ENCODE measurements at regions of chr19 and their contacts with region 1.

Region 1: DNA sequence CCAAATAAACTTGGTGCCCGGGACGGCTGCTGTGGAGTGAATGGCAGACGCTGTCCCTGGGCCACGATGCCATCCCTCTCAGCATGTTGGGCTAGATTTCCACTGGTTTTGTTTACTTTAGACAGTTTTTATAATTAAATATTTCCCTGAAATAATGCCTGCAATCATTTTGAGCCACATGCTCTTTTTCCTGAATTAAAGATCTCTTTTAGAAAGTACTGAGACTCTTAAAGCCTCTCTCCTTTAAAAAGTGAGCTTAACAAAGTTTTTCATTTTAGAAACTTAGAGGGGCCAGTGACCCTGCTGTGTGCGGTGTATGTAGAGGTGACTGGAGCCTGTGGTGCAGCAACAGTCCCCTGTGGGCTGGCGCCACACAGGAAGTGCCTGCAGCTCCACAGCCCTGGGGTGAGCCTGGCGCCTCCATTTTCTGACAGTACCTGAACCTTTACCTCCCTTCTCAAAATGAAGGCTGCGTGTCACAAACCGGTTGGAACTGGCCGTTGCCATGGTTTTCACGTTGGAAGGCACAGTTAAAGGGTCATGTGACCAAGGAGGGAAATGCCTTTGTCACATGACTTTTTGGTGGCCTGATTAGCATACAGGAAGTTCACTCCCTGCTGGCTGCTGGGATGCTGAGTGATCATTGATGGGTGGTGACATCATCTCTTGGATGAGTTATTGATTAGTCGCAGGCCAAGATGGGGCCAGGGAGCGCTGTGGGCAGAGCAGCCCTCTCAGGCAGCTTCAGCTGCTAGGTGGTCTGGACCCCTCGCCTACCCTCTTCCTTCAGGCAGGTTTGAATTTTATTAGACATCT is 26.3 kb downstream of the TSSK6 start:
- DNase-seq: peak; percentile 95
- ATAC-seq: peak; percentile 93
- H3K4me3 Mint-ChIP-seq: peak overlapping the region; percentile 43
- H3K27ac Mint-ChIP-seq: peak overlapping the region; percentile 97
- H3K4me1 Mint-ChIP-seq: peaks cover 57% of the 10 kb centered on the region
- H3K27me3 Mint-ChIP-seq: no peaks in the 10 kb centered on the region

Region 2: DNA sequence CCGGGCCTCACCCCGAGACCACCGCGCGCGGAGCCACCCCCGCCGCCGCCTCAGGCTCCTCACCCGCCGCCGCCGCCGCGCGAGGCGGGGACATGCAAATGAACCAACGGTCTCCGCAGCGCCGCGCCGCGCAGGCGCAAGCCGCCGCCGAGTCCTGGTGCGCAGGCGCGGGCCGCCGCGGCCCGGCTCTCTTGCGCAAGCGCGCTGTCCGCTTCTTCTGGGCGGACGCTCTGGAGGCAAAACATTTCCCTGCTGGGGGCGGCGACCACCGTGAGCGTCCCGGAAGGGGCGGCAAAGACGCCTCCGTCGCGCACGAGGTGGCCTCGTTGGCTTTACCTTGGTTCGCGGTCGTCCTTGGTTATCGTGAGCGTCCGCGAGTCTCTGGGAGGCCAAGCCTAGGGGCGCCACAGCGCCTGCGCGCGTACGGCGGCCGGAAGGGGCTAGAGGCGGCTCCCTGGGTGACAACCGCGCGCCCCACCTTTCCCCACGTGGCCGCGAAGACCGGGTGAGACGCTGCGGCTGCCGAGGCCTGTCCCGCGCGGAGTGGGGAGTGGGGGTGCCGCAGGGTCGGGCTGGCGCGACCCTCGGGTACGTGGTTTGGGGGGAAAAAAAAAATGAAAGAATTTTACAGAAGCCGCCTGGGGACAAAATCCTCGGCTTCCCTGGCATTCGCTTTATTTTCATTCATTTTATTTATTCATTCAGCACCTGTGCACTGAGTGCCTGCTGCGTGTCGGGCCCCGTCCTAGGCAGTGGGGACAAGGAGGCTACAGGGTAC is 455.5 kb before region 1 on chr19 and contains the starts of genes ARMC6 and SUGP2:
- CTCF ChIA-PET with region 1: interaction called, 3 read pairs
- POLR2A ChIA-PET with region 1: no interaction called
- intact Hi-C with region 1: loop called in 1 of 2 experiments (anchors 1 kb)
- DNase-seq: peak; percentile 92
- ATAC-seq: peak; percentile 78
- H3K4me3 Mint-ChIP-seq: peak within 1 kb of the TSS; percentile 98
- H3K27ac Mint-ChIP-seq: peak within 1 kb of the TSS; percentile 96
- H3K4me1 Mint-ChIP-seq: peaks cover 31% of the 10 kb centered on the region
- H3K27me3 Mint-ChIP-seq: no peaks in the 10 kb centered on the region
- total RNA-seq, gene ARMC6: 33.0 to 40.8 TPM
- total RNA-seq, gene SUGP2: 89.8 to 104 TPM

Region 3: DNA sequence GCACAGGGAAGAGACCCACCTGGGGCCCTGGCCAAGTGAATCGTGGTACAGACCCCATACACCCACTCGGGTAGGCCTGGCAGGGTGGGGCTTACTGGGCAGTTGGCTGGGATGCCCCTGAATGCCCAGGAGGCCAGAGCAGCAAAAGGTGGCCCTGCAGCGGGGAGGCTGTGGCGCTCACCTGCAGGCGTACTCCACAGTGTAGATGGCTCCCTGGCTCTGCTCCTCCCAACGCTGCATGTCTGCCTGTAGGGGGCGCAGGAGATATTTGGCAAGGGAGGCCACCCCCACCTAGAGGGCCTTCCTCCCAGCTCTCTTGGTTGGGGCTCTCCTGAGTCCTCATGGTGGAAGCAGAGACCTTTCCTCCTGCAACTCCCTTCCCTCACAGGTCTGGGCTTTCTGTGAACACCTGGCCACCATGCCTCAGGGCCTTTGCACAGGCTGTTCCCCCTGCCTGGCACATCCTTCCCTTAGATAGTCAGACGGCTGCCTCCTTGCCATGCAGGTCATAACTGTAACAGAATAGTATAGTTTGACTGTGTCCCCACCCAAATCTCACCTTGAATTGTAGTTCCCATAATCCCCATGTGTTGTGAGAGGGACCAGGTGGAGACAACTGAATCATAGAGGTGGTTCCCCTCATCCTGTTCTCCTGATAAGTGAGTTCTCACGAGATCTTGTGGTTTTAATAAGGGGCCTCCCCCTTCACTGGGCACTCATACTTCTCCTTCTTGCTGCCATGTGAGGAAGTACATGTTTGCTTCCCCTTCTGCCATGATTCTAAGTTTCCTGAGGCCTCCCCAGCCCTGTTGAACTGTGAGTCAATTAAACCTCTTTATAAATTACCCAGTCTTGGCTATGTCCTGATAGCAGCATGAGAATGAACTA is 303.0 kb before region 1 on chr19:
- CTCF ChIA-PET with region 1: no interaction called
- POLR2A ChIA-PET with region 1: no interaction called
- intact Hi-C with region 1: loop called in 1 of 2 experiments (anchors 1 kb)
- DNase-seq: peak; percentile 75
- ATAC-seq: peak; percentile 89
- H3K4me3 Mint-ChIP-seq: no peak overlapping the region
- H3K27ac Mint-ChIP-seq: peak overlapping the region; percentile 60
- H3K4me1 Mint-ChIP-seq: peaks cover 28% of the 10 kb centered on the region
- H3K27me3 Mint-ChIP-seq: no peaks in the 10 kb centered on the region

Region 4: DNA sequence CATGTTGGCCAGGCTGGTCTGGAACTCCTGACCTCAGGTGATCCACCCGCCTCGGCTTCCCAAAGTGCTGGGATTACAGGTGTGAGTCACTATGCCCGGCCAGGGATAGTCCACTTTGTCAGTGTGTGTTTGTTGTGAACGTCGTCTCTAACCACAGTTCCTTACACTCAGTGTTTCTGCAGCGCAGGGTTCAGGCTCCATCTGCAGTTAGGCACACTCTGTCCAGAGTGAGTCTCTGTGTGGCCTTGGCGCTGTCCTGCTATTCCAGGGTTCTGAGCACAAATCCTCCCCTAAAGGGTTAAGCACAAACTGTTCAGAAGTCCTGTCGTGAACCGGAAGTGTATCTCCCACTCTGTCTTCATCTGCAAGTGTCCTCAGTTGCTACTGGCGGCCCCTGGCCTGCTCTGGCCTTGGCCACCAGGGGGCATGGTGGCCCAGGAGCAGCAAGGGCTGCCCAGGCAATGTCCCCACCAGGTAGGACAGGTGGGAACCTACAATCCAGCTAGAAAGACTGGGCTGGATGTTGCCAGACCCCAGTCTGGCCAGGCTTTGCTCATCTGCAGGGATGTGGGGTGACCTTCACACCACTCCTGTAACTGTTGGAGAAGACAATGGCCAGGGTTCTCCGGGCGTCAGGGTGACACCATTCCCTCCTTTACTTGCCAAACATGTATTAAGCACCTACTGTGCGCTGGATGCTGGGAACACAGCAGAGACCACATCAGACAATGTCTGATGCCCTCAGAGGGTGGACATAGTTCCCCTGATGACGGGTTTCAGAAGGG is 122.3 kb before region 1 on chr19:
- CTCF ChIA-PET with region 1: interaction called, 123 read pairs
- POLR2A ChIA-PET with region 1: interaction called, 3 read pairs
- intact Hi-C with region 1: loop called (anchors 1 kb)
- DNase-seq: peak; percentile 86
- ATAC-seq: peak; percentile 84
- H3K4me3 Mint-ChIP-seq: no peak overlapping the region
- H3K27ac Mint-ChIP-seq: peak overlapping the region; percentile 38
- H3K4me1 Mint-ChIP-seq: peaks cover 17% of the 10 kb centered on the region
- H3K27me3 Mint-ChIP-seq: no peaks in the 10 kb centered on the region

Region 5: DNA sequence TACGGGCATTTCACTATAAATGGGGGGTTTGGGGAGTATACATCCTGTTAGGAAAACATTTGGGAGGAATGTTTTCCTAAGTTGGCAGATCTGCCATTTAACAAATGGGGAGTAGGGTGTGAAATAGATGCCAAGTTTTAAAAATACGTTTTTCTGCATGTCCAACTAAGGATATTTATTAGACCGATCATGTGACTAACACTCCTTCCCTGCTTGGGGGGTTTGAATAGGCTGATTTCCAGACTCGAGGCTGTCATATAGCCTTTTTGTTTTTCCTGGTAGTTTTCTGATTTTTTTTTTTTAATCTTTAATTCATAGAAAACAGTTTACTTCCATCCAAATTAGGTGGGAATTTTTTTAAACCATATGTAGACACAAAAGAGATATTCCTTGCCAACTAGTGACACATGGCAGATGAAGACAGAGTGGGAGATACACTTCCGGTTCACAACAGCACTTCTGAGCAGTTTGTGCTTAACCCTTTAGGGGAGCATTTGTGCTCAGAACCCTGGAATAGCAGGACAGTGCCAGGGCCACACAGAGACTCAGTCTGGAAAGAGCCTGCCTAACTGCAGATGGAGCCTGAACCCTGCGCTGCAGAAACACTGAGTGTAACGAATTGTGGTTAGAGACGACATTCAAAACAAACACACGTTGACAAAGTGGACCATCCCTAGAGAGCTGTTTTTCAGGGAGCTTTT is 89.2 kb before region 1 on chr19:
- CTCF ChIA-PET with region 1: interaction called, 19 read pairs
- POLR2A ChIA-PET with region 1: no interaction called
- intact Hi-C with region 1: loop called in 1 of 2 experiments (anchors 1 kb)
- DNase-seq: no peak
- ATAC-seq: peak; percentile 18
- H3K4me3 Mint-ChIP-seq: no peak overlapping the region
- H3K27ac Mint-ChIP-seq: no peak overlapping the region
- H3K4me1 Mint-ChIP-seq: peaks cover 40% of the 10 kb centered on the region
- H3K27me3 Mint-ChIP-seq: no peaks in the 10 kb centered on the region

Region 6: DNA sequence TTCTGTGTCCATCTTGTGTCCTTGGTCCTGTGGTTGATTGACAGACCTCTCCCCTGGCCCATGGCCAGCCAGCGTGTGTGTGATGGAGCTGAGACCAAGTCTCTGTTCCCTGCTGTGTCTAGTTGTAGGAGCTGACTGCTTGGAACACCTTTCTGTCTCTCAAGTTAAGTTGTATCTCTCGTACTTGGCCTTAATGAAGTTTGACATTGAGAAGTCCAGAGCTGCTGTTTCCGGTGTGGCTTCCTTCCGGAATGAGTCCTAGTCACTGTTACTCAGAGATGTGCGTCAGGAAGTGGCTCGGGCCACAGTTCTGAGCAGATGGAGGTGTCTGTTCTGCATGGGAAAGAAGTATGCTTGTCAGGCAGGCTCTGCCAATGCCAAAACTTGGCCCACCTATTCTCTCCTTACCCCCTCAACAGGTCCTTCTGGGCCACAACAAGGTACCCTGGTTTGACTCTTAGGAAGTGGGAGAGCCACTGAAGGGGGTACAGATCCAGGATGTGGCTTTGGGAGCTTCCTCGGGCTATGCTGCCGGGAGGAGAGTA is 29.3 kb before region 1 on chr19:
- CTCF ChIA-PET with region 1: interaction called, 17 read pairs
- POLR2A ChIA-PET with region 1: interaction called, 3 read pairs
- intact Hi-C with region 1: loop called (anchors 1 to 2 kb)
- DNase-seq: peak; percentile 85
- ATAC-seq: peak; percentile 67
- H3K4me3 Mint-ChIP-seq: peak overlapping the region; percentile 79
- H3K27ac Mint-ChIP-seq: peak overlapping the region; percentile 99
- H3K4me1 Mint-ChIP-seq: peaks cover 84% of the 10 kb centered on the region
- H3K27me3 Mint-ChIP-seq: no peaks in the 10 kb centered on the region